ENCODE measurements at regions of chr7 and their contacts with region 1.

Region 1: GRCh38 chr7:98420966-98421612 is 20.2 kb upstream of the BAIAP2L1 start:
- DNase-seq: no peak
- H3K4me3 ChIP-seq: no peak overlapping the region
- H3K27me3 ChIP-seq: no peaks in the 10 kb centered on the region
- CTCF ChIP-seq: peak; percentile 93

Region 2: GRCh38 chr7:98434095-98434494 is 13.0 kb after region 1 on chr7:
- CTCF ChIA-PET with region 1: interaction called, 15 read pairs
- POLR2A ChIA-PET with region 1: no interaction called
- DNase-seq: no peak
- H3K4me3 ChIP-seq: no peak overlapping the region
- H3K27me3 ChIP-seq: no peaks in the 10 kb centered on the region
- CTCF ChIP-seq: no peak